ENCODE measurements at regions of chr12 and their contacts with region 1.

Region 1: DNA sequence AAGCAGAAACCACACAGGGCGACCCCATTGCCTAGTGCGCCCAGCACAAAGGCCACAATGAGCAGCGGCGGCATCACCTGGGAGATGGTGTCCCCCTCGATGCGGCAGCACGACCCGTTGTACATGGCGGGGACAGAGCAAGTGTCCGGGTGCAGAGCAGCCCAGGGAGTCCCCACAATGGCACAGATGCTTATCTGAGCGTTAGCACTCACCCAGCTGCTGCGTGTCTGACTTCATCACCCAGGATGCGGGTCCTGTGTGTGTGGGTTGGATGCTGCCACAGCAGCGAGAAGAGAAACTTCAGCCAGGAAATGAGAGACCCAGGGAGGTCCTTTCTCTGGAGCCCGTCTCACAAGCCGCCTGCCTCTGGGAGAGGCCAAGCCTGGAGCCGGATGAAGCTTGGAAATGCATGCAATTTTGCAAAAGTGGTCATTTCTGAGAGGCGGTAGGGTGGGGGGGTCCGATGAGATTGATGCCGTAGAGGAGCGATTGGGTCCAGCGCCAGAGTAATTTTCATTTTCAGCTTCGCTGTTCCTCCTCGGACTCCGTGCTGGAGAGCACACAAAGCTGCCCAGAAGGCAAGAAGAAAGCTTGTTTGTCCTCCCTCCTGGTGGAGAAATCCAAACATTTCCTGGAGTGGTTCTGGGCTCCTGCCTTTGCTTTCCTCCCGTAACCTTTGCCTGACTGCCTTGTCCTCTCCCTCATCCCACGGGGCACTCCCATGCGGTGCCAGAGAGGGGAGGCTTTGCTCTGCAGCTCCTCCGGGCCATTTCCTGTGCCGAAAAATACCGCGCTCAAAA is at the start of gene HCAR1:
- DNase-seq: peak; percentile 61
- H3K4me3 ChIP-seq: peak within 1 kb of the TSS; percentile 61 to 81 (median 62)
- H3K27ac ChIP-seq: peak within 1 kb of the TSS; percentile 69
- H3K4me1 ChIP-seq: peaks cover 48% of the 10 kb centered on the region
- H3K27me3 ChIP-seq: no peaks in the 10 kb centered on the region
- CTCF ChIP-seq: peak in 1 of 2 donors; percentile 28
- total RNA-seq, gene HCAR1: 5.5 to 8.8 TPM

Region 2: DNA sequence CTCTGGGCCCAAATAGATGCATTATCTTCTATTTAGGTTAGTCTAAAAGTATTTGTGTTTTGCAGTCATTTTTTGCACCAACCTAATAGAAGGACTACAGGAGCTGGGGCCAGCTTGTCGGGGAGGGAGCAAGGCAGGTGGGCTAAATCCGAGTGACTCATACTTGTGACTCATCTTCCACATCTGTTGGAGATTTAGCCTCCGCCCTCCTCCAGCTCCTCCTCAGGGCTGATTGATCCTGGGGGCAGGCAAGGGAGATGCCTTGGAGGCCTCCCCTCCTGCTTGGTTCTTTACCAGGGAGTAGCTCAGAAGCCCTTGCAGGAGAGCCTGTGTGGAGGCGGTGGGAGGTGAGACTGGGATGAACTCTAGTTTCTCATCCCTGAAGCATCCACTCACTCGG is 964.8 kb before region 1 on chr12:
- CTCF ChIA-PET with region 1: no interaction called
- dilution Hi-C with region 1: no loop called
- in situ Hi-C with region 1: no loop called
- intact Hi-C with region 1: no loop called
- DNase-seq: peak; percentile 58
- H3K4me3 ChIP-seq: no peak overlapping the region
- H3K27ac ChIP-seq: no peak overlapping the region
- H3K4me1 ChIP-seq: peaks cover 10% of the 10 kb centered on the region
- H3K27me3 ChIP-seq: no peaks in the 10 kb centered on the region
- CTCF ChIP-seq: no peak

Region 3: DNA sequence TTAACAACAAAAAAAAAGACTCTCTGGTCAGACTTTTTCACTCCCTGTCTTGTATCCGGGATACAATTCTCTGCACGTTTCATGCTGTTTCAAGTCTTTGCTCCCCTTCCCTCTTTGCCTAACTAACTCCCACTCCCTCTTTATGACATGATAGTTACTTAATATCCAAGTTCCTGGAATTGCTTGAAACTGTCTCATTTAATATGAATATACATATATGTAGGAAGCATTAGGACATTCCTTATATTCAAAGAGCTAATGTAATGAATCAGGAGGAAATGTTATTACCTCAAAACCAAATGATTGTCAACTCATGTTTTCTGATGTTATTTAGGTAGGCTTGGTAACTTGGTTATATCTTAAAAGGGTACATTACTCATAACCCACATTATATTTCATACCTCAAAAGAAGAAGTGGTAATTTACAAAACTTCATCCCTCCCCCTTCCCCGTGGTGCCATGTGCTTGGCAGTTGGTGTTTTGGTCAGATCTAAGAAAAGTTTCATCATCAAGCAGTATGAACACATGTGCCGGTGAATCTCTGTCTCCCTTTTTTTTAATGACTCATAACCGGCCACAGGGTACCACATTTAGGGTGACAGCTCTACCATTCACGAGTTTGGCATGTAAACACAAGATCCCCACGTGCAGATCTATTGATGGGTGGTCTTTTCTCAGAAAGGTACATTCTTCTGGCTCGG is 83.7 kb before region 1 on chr12:
- CTCF ChIA-PET with region 1: no interaction called
- dilution Hi-C with region 1: loop called (anchors 5 kb)
- in situ Hi-C with region 1: no loop called
- intact Hi-C with region 1: no loop called
- DNase-seq: peak; percentile 90
- H3K4me3 ChIP-seq: no peak overlapping the region
- H3K27ac ChIP-seq: peak overlapping the region; percentile 70
- H3K4me1 ChIP-seq: peaks cover 7% of the 10 kb centered on the region
- H3K27me3 ChIP-seq: no peaks in the 10 kb centered on the region
- CTCF ChIP-seq: no peak

Region 4: GRCh38 chr12:122681814-122682213 is 48.6 kb before region 1 on chr12:
- CTCF ChIA-PET with region 1: no interaction called
- dilution Hi-C with region 1: loop called (anchors 5 kb)
- in situ Hi-C with region 1: no loop called
- intact Hi-C with region 1: no loop called
- DNase-seq: peak; percentile 30
- H3K4me3 ChIP-seq: no peak overlapping the region
- H3K27ac ChIP-seq: no peak overlapping the region
- H3K4me1 ChIP-seq: peaks cover 18% of the 10 kb centered on the region
- H3K27me3 ChIP-seq: no peaks in the 10 kb centered on the region
- CTCF ChIP-seq: no peak

Region 5: DNA sequence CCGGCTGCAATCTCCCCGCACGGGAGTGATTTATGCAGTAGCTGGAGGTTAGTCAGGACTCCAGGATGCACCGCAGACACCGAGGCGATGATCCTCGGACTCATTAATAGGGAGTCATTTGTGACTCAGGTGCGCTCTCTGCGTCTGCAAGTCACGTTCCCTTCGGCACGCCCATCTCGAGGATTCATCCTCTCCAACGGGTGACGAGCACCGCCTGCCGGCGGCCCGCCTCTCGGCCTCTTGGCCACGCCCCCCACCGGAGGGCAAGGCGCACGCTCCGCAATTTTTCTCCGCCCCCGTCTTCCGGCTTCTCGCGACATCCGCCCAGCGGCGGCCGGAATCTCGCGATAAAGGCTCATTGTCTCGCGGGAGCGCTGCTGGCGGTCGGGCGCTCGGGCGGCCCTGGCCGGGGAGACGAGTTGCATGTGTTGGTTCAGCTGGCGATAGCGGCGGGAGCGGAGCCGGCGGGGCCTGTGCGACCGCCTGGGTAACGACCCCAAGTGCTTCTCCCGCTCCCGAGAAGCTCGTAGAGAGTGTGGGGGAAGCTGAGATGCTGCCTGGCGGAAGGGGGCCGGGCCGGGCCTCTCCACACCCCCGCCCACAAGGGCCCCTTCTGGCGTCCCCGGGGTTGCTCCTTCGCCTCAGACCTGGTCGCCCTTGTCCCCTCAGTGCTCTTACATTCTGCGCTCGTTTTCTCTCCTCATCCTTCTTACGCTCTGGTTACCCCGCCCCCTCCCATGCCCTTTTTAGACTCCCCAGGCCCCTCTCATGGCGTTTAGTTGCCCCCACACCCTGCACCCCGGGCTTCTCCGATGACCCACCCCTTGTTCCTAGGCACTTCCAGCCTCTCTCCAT is 22.3 kb after region 1 on chr12 and contains the start of gene DENR:
- CTCF ChIA-PET with region 1: no interaction called
- dilution Hi-C with region 1: no loop called
- in situ Hi-C with region 1: no loop called
- intact Hi-C with region 1: loop called (anchors 1 kb)
- DNase-seq: peak; percentile 99
- H3K4me3 ChIP-seq: peak within 1 kb of the TSS; percentile 70 to 80 (median 78)
- H3K27ac ChIP-seq: peak within 1 kb of the TSS; percentile 66
- H3K4me1 ChIP-seq: peaks cover 14% of the 10 kb centered on the region
- H3K27me3 ChIP-seq: no peaks in the 10 kb centered on the region
- CTCF ChIP-seq: peak; percentile 88 to 92
- total RNA-seq, gene DENR: 42.5 to 73.0 TPM

Measured in mammary epithelial cell (primary cell).